GM10248 (cell line): ENCODE measurements at regions of chr17 and their contacts with region 1.

Region 1: DNA sequence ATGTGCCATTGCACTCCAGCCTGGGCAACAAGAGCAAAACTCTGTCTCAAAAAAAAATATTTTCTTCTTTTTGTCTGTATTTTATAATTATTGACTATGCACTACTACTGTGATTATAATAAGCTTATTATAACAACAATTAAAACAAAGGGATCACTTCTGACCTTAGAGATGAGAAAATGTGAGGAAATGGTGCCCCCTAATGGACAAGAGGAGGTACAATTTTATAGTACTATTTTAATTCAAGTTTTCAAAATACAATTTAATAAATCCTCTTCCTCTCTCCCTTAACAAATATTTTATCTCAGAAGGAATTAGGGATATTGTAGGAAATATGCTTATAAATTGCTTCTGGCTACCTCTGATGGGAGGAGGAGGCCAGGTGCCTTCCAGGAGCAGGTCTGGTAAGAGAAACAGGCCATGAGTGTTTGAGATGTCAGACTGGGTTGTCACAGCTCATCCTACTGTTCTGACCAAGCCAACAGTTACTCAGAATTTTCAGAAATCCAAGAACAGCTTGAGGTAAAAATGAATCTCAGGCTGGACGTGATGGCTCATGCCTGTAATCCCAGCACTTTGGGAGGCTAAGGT is 14.0 kb downstream of the VPS53 start:
- DNase-seq: peak; percentile 74
- CTCF ChIP-seq: peak; percentile 50

Region 2: GRCh38 chr17:416293-417206 is 284.0 kb before region 1 on chr17:
- CTCF ChIA-PET with region 1: interaction called, 167 read pairs
- POLR2A ChIA-PET with region 1: no interaction called
- DNase-seq: peak; percentile 41
- CTCF ChIP-seq: no peak

Region 3: GRCh38 chr17:549177-550040 is 151.2 kb before region 1 on chr17:
- CTCF ChIA-PET with region 1: no interaction called
- POLR2A ChIA-PET with region 1: no interaction called
- DNase-seq: no peak
- CTCF ChIP-seq: no peak

Region 4: DNA sequence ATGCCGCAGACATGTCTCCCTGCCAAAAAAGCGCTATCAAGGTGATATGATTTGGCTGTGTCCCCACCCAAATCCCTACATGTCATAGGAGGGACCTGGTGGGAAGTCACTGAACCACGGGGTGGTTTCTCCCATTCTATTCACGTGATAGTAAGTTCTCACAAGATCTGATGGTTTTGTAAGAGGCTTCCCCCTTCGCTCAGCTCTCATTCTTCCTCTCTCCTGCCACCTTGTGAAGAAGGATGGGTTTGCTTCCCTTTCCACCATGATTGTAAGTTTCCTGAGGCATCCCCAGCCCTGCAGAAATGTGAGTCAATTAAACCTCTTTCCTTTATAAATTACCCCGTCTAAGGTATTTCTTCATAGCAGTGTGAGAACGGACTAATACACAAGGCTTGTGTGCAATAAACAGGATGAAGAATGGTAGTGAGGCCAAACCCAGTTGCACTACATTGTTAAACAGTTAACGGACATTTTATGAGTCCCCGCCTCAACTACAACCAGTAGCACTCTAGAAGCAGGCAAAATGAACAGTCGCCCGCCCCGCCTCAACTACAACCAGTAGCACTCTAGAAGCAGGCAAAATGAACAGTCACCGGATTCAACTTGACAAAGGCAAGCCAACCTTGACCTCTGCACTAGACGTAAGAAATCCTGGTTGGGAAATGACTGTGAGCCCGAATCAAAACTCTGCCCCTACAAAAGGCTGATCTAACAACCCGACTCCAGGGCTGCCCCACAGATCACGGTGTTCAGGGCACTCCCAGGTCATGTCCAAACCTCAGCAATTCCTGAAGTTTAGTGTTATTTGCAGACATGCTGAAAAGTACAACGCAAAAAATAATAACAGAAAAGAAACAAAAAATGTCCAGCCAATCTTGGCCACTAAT is 12.3 kb before region 1 on chr17:
- CTCF ChIA-PET with region 1: interaction called, 27 read pairs
- POLR2A ChIA-PET with region 1: no interaction called
- DNase-seq: no peak
- CTCF ChIP-seq: no peak

Region 5: GRCh38 chr17:716238-716637 is 15.6 kb after region 1 on chr17:
- CTCF ChIA-PET with region 1: interaction called, 20 read pairs
- POLR2A ChIA-PET with region 1: no interaction called
- DNase-seq: no peak
- CTCF ChIP-seq: no peak

Region 6: GRCh38 chr17:728911-729310 is 28.3 kb after region 1 on chr17:
- CTCF ChIA-PET with region 1: interaction called, 12 read pairs
- POLR2A ChIA-PET with region 1: no interaction called
- DNase-seq: no peak
- CTCF ChIP-seq: no peak